ENCODE measurements at regions of chr3 and their contacts with region 1.

Region 1: GRCh38 chr3:31391150-31391549 is 141.6 kb upstream of the STT3B start:
- DNase-seq: no peak
- ATAC-seq: no peak
- H3K4me3 ChIP-seq: no peak overlapping the region
- H3K4me3 Mint-ChIP-seq: no peak overlapping the region
- H3K27ac ChIP-seq: no peak overlapping the region
- H3K27ac Mint-ChIP-seq: no peak overlapping the region
- H3K4me1 ChIP-seq: no peaks in the 10 kb centered on the region
- H3K4me1 Mint-ChIP-seq: peaks cover 10 to 19% (median 15%) of the 10 kb centered on the region in 7 donors
- H3K27me3 ChIP-seq: no peaks in the 10 kb centered on the region
- H3K27me3 Mint-ChIP-seq: no peaks in the 10 kb centered on the region

Region 2: GRCh38 chr3:31407665-31408064 is 16.5 kb after region 1 on chr3:
- CTCF ChIA-PET with region 1: no interaction called
- POLR2A ChIA-PET with region 1: interaction called, 3 read pairs
- intact Hi-C with region 1: loop called in 1 of 2 experiments (anchors 2 kb)
- DNase-seq: no peak
- ATAC-seq: no peak
- H3K4me3 ChIP-seq: no peak overlapping the region
- H3K4me3 Mint-ChIP-seq: no peak overlapping the region
- H3K27ac ChIP-seq: no peak overlapping the region
- H3K27ac Mint-ChIP-seq: no peak overlapping the region
- H3K4me1 ChIP-seq: no peaks in the 10 kb centered on the region
- H3K4me1 Mint-ChIP-seq: peaks cover 4 to 25% (median 19%) of the 10 kb centered on the region in 7 donors
- H3K27me3 ChIP-seq: no peaks in the 10 kb centered on the region
- H3K27me3 Mint-ChIP-seq: peaks cover 0 to 6% (median 0%) of the 10 kb centered on the region in 5 donors

Region 3: DNA sequence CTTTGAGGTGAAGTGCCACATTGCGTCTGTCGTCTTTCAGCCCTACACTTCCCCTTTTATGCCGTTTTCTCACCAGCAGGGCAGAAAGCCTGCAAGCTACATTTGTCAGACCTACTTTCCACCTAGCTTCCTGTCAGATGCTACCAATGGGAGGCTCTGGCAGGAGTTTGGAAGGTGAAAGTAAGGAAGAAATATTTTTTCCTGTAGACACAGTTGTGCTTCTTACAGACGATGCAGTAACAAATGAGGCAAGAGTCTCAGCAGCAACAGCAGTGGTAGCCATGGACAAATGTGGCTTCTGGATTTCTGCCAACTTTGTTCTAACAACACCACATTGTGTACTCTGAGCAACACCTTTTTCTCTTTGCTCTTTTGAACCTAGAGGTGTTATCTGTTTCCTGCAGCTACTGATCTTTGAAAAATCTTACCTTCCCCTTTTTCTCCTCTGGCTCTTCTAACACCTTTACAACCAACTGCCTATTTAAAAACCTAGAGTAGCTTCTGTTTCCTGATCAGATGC is 71.0 kb after region 1 on chr3:
- CTCF ChIA-PET with region 1: no interaction called
- POLR2A ChIA-PET with region 1: no interaction called
- intact Hi-C with region 1: loop called in 1 of 2 experiments (anchors 10 kb)
- DNase-seq: peak in 7 of 9 donors; percentile 78 to 93 (median 86)
- ATAC-seq: peak; percentile 93
- H3K4me3 ChIP-seq: peak overlapping the region; percentile 49
- H3K4me3 Mint-ChIP-seq: peak overlapping the region; percentile 28 to 95 (median 78)
- H3K27ac ChIP-seq: peak overlapping the region; percentile 68
- H3K27ac Mint-ChIP-seq: peak overlapping the region; percentile 70 to 100 (median 96)
- H3K4me1 ChIP-seq: peaks cover 49 to 59% of the 10 kb centered on the region in 2 donors
- H3K4me1 Mint-ChIP-seq: peaks cover 14 to 79% (median 68%) of the 10 kb centered on the region in 7 donors
- H3K27me3 ChIP-seq: no peaks in the 10 kb centered on the region
- H3K27me3 Mint-ChIP-seq: no peaks in the 10 kb centered on the region

Region 4: DNA sequence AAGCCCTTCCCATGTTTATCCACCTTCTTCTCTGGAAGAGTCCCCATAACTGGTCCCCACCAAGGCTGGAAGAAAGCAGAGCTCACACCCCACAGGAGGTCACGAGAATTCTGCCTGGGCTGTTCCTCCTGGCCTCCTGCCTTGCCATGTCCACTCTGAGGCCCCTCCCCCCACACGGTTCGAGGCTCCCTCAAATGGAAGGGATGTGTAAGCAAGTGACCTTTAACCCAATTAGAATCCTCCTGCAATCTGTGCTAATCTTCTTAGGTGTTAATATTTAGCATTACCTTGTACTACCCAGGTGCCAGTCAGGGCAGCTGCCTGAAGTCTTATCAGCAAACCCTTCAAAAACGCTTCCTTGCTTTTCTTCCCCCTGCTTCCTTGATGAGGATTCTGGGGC is 1211.9 kb after region 1 on chr3:
- CTCF ChIA-PET with region 1: no interaction called
- POLR2A ChIA-PET with region 1: no interaction called
- intact Hi-C with region 1: no loop called
- DNase-seq: no peak
- ATAC-seq: no peak
- H3K4me3 ChIP-seq: no peak overlapping the region
- H3K4me3 Mint-ChIP-seq: no peak overlapping the region
- H3K27ac ChIP-seq: no peak overlapping the region
- H3K27ac Mint-ChIP-seq: peak overlapping the region in 1 of 9 donors; percentile 62
- H3K4me1 ChIP-seq: no peaks in the 10 kb centered on the region
- H3K4me1 Mint-ChIP-seq: no peaks in the 10 kb centered on the region
- H3K27me3 ChIP-seq: no peaks in the 10 kb centered on the region
- H3K27me3 Mint-ChIP-seq: peaks cover 2 to 21% (median 11%) of the 10 kb centered on the region in 5 donors